Calu3 (cell line): ENCODE measurements at regions of chr1 and their contacts with region 1.

Region 1: GRCh38 chr1:189606795-189607476 is 870.7 kb downstream of the BRINP3 start:
- DNase-seq: no peak
- H3K4me3 Mint-ChIP-seq: peak overlapping the region; percentile 30
- H3K27ac Mint-ChIP-seq: peak overlapping the region; percentile 33
- H3K4me1 Mint-ChIP-seq: peaks cover 41% of the 10 kb centered on the region
- H3K27me3 Mint-ChIP-seq: no peaks in the 10 kb centered on the region
- CTCF ChIP-seq: no peak

Region 2: DNA sequence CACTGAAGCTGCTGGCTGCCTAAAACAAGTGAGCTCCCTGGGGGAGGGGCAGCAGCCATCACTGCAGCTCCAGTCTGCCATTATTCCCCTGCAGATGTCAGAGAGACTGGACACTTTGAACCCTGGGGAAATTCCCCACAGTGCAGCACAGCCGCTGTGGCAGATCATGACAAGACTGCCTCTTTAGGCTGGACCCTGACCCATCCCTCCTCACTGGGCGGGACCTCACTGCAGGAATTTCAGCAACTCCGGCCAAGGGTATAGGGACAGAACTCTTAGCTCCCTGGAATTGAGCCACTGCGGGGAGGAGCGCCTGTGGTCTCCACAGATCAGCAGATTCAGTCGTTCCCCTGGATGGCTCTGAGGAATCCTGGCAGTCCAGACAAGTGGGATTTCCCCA is 93.8 kb before region 1 on chr1:
- CTCF ChIA-PET with region 1: no interaction called
- intact Hi-C with region 1: loop called (anchors 5 kb)
- DNase-seq: no peak
- H3K4me3 Mint-ChIP-seq: no peak overlapping the region
- H3K27ac Mint-ChIP-seq: no peak overlapping the region
- H3K4me1 Mint-ChIP-seq: peaks cover 23% of the 10 kb centered on the region
- H3K27me3 Mint-ChIP-seq: no peaks in the 10 kb centered on the region
- CTCF ChIP-seq: no peak

Region 3: DNA sequence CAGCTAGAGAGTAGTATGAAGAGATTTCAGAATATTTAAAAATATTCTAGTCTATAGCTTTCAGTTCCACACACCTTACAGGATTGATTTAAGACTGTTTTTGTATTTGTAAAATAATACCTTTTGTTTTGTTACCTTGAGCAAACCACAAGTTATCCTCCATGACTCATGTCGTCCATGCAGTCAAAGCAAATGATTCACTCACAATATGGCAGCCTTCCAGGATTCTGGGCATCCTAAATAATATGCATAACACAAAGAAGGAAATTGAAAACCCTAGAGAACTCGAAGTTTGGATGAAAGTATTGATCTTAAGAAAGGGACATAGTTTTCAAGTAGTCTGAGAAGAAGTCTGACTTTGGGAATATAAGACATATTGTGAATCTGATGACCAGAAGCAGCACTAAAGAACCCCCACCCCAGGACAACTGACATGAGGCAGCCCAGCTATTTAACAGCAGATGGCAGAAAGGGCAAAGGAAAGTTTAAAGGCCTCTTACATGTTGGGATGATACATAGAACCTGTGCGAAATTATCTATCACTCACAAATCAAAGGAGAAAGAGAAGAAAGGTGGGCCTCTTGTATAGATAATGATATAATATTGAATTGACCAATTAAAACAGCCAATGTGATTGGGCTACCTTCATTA is 12.9 kb after region 1 on chr1:
- CTCF ChIA-PET with region 1: no interaction called
- intact Hi-C with region 1: no loop called
- DNase-seq: peak; percentile 87
- H3K4me3 Mint-ChIP-seq: no peak overlapping the region
- H3K27ac Mint-ChIP-seq: peak overlapping the region; percentile 56
- H3K4me1 Mint-ChIP-seq: peaks cover 36% of the 10 kb centered on the region
- H3K27me3 Mint-ChIP-seq: no peaks in the 10 kb centered on the region
- CTCF ChIP-seq: no peak